Dorsolateral prefrontal cortex (tissue), 120 donors: ENCODE measurements at regions of chr1 and their contacts with region 1.

Region 1: GRCh38 chr1:206106328-206107167 is 10.6 kb downstream of the AVPR1B start:
- DNase-seq: peak; percentile 72 to 88 (median 78)
- H3K4me3 ChIP-seq: no peak overlapping the region
- H3K27ac ChIP-seq: peak overlapping the region in 1 of 59 donors; percentile 10
- H3K27me3 ChIP-seq: no peaks in the 10 kb centered on the region
- CTCF ChIP-seq: peak; percentile 84 to 98 (median 94)

Region 2: GRCh38 chr1:205919026-205919746 is 187.4 kb before region 1 on chr1:
- intact Hi-C with region 1: loop called (anchors 2 kb)
- DNase-seq: peak; percentile 74 to 95 (median 88)
- H3K4me3 ChIP-seq: no peak overlapping the region
- H3K27ac ChIP-seq: peak overlapping the region in 29 of 59 donors; percentile 1 to 72 (median 41)
- H3K27me3 ChIP-seq: no peaks in the 10 kb centered on the region
- CTCF ChIP-seq: peak in 55 of 56 donors; percentile 81 to 99 (median 96)

Region 3: DNA sequence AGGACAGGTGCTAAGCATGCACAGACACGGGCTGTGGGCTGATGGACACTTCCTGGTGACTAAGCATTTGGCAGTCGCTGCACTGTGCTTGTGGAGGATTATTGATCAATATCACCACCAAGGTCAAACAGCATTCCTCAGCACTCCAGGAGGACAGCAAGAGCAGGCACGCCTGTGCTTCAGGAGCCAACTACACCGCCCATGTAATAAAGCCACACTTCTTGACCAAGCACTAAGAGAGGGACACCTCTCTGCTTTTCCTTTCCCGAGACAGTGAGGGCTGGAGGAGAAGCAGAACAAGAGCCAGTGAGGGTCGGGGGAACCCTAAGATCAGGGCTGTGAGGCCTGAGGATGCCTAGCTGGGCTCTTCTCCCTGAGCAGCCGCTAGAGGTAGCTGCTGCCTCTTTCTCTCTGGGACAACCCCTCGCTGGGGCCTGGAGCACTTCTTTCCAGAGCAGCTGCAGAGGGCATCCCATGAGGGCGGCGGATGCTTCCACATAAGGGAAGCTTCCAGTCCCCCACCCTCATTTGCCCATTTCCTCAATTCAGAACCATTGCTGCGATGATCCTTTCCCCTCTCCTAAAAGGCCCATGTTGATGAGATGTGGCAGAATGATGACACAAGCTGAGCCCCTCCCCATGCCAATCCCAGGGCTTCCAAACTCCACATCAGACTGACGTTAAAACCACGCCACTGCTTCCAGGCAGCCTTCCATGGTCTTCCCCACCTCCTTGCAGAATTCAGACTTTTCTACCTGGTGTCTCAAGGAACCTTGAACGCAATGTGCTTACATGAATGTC is 122.4 kb before region 1 on chr1:
- intact Hi-C with region 1: loop called (anchors 1 to 2 kb)
- DNase-seq: peak; percentile 26 to 83 (median 80)
- H3K4me3 ChIP-seq: no peak overlapping the region
- H3K27ac ChIP-seq: peak overlapping the region in 3 of 59 donors; percentile 9 to 31 (median 18)
- H3K27me3 ChIP-seq: no peaks in the 10 kb centered on the region
- CTCF ChIP-seq: peak in 55 of 56 donors; percentile 58 to 98 (median 83)

Region 4: DNA sequence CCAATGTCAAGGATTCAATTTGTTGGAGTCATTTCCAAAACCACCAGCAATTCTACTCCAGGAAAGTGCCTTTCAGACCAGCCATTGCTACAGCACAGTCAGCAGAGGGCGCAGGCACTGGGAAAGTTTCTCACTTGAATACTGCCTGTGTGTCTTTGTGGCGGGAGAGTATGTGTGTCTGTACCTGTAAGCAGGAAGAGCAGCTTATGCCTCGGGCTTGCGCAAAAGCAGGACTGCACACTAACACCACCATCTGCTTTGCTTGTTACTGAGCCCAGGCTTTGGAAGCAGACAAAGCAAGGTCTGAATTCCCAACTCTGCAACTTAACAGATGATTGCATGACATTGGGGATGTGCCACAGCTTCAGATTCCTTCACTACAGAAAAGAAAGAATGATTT is 75.8 kb before region 1 on chr1:
- intact Hi-C with region 1: loop called (anchors 2 to 10 kb)
- DNase-seq: peak; percentile 33 to 77 (median 73)
- H3K4me3 ChIP-seq: no peak overlapping the region
- H3K27ac ChIP-seq: no peak overlapping the region
- H3K27me3 ChIP-seq: no peaks in the 10 kb centered on the region
- CTCF ChIP-seq: peak; percentile 47 to 84 (median 74)

Region 5: DNA sequence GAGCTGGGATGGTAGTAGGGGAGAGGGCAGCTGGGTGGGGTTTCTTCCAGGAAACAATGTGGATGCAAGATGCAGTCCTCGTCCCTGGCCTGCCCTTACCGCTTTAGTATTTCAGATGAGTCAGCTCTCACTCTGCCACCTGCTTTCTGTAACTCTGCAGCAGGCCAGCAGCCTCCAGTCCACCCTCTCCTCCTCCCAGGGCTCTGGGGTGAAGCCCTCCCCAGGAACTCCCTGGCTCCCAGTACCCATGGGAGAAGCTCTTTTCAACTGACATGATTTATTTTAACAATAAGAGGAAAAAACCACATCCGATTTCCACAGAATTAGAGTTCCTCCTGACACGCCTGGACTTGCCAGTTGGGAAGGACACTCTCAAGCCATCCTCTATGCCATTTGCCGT is 719.9 kb after region 1 on chr1:
- intact Hi-C with region 1: no loop called
- DNase-seq: no peak
- H3K4me3 ChIP-seq: no peak overlapping the region
- H3K27ac ChIP-seq: no peak overlapping the region
- H3K27me3 ChIP-seq: peaks cover 0 to 5% (median 0%) of the 10 kb centered on the region in 45 donors
- CTCF ChIP-seq: no peak